ENCODE measurements at regions of chr12 and their contacts with region 1.

Region 1: GRCh38 chr12:66269757-66270383 is 32.4 kb upstream of the HELB start:
- DNase-seq: peak; percentile 54
- H3K4me3 Mint-ChIP-seq: no peak overlapping the region
- H3K27ac Mint-ChIP-seq: no peak overlapping the region
- H3K4me1 Mint-ChIP-seq: no peaks in the 10 kb centered on the region
- H3K27me3 Mint-ChIP-seq: peaks cover 2% of the 10 kb centered on the region
- CTCF ChIP-seq: peak; percentile 50

Region 2: DNA sequence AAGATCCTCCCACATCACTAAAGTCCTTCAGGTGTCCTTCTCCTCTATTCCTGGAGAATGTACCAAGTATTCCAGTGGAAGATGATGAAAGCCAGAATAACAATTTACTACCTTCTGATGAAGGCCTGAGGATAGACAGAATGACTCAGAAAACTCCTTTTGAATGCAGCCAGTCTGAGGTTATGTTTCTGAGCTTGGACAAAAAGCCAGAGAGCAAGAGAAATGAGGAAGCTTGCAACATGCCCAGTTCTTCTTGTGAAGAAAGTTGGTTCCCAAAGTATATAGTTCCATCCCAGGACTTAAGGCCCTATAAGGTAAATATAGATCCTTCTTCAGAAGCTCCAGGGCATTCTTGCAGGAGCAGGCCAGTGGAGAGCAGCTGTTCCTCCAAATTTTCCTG is 22.1 kb before region 1 on chr12:
- CTCF ChIA-PET with region 1: interaction called, 39 read pairs
- POLR2A ChIA-PET with region 1: no interaction called
- intact Hi-C with region 1: no loop called
- DNase-seq: no peak
- H3K4me3 Mint-ChIP-seq: no peak overlapping the region
- H3K27ac Mint-ChIP-seq: no peak overlapping the region
- H3K4me1 Mint-ChIP-seq: no peaks in the 10 kb centered on the region
- H3K27me3 Mint-ChIP-seq: peaks cover 28% of the 10 kb centered on the region
- CTCF ChIP-seq: no peak

Region 3: DNA sequence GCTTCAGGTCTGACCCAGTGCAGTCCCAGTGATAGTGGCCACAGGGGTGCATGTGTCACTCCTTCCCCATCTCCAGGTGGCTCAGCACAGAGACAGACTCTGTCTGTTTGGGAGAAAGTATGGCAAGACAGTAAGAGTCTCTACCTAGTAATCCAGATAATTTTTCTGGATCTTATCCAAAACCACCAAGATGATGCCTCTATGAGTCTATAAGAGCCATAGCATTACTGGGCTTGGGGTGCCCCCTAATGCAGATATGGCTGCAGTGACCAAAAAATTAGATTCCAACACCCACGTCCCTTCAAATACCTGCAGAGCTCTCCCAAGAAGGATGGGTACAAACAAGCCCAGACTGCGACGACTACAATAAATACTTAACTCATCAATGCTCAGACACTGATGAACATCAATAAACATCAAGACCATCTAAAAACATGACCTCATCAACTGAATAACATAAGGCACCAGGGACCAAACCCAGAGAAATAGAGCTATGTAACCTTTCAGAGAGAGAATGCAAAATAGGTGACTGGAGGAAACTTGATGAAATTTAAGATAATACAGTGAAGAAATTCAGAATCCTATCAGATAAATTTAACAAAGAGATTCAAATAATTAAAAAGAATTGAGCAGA is 285.4 kb after region 1 on chr12:
- CTCF ChIA-PET with region 1: interaction called, 3 read pairs
- POLR2A ChIA-PET with region 1: no interaction called
- intact Hi-C with region 1: loop called (anchors 10 kb)
- DNase-seq: peak; percentile 29
- H3K4me3 Mint-ChIP-seq: no peak overlapping the region
- H3K27ac Mint-ChIP-seq: no peak overlapping the region
- H3K4me1 Mint-ChIP-seq: no peaks in the 10 kb centered on the region
- H3K27me3 Mint-ChIP-seq: no peaks in the 10 kb centered on the region
- CTCF ChIP-seq: peak; percentile 22

Measured in MCF 10A (cell line).